Pancreas (tissue), 10 donors: ENCODE measurements at regions of chr20 and their contacts with region 1.

Region 1: GRCh38 chr20:46349035-46349741 is 40.9 kb upstream of the CDH22 start:
- DNase-seq: peak; percentile 45 to 84 (median 67)
- ATAC-seq: peak; percentile 49 to 92 (median 80)
- H3K4me3 ChIP-seq: no peak overlapping the region
- H3K27ac ChIP-seq: no peak overlapping the region
- H3K4me1 ChIP-seq: no peaks in the 10 kb centered on the region
- H3K27me3 ChIP-seq: no peaks in the 10 kb centered on the region
- CTCF ChIP-seq: peak; percentile 28 to 76 (median 68)

Region 2: DNA sequence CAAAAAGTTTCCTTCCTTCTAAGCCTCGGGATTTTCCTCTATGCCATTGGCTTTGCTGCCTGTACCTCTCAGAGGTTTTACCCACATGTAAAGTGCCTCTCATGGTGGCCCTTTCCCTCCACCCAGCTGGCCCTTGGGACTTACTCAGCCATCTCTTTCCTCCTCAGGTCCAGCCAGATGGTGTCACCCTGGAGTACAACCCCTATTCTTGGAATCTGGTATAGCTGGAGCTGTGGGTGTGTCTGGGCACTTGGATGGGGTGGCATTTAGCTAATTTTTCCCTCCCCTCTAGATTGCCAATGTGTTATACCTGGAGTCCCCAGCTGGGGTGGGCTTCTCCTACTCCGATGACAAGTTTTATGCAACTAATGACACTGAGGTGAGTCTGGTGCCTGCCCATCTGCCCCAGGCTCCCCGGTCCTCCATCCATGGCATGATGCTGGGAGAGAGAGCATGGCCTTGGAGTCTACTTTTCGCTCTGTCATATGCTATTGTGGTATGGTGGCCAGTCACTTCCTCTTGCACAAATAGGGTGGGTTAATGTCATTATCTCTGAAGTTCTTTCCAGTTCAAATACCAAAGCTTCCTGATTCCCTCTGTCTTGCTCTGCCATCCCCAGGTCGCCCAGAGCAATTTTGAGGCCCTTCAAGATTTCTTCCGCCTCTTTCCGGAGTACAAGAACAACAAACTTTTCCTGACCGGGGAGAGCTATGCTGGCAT is 456.9 kb before region 1 on chr20:
- intact Hi-C with region 1: no loop called
- DNase-seq: peak in 2 of 6 donors; percentile 31 to 52
- ATAC-seq: peak in 2 of 4 donors; percentile 26 to 40
- H3K4me3 ChIP-seq: peak overlapping the region; percentile 65 to 93 (median 80)
- H3K27ac ChIP-seq: no peak overlapping the region
- H3K4me1 ChIP-seq: peaks cover 3 to 4% (median 4%) of the 10 kb centered on the region in 3 donors
- H3K27me3 ChIP-seq: no peaks in the 10 kb centered on the region
- CTCF ChIP-seq: no peak

Region 3: DNA sequence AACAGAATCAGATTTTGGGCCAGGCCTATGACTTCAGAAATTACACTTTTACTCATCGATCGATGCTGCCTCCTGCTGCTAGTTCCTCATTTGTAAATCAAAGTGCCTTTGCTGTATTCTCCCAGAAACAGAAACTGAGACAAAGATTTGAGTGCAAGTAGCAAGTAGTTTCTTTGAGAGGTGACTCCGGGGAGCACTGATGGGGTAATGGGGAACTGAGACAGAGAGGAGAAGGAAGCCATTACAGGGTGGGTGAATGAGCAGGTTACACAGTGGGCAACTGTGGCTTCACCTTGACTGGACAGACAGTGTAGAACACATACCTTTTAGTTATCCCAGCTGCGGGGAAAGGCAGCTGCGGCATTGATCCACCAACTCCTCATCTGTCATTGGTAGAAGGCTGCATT is 240.8 kb before region 1 on chr20:
- intact Hi-C with region 1: no loop called
- DNase-seq: no peak
- ATAC-seq: no peak
- H3K4me3 ChIP-seq: no peak overlapping the region
- H3K27ac ChIP-seq: no peak overlapping the region
- H3K4me1 ChIP-seq: no peaks in the 10 kb centered on the region
- H3K27me3 ChIP-seq: peaks cover 0 to 9% (median 0%) of the 10 kb centered on the region in 4 donors
- CTCF ChIP-seq: no peak

Region 4: DNA sequence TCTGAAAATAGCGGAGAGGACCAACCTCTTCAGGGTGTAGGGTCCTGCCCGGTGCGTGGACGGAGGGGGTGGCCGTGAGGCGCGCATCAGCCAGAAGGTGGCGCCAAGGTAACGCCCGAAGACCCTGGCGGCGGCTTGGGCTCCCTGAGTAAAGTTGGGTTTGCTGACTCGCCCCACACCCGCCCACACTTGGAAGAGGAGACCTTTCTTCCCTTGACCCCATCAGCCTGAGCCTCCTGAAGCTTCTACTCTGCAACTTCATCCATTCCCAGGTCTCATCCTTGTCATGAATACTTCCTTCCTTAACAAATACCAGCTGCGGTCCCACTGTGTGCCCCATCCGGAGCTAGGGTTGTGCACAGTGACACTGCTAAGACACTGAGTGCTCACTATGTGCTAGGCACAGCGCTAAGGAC is 216.5 kb before region 1 on chr20:
- intact Hi-C with region 1: loop called in 2 of 3 experiments (anchors 5 to 10 kb)
- DNase-seq: peak; percentile 47 to 89 (median 72)
- ATAC-seq: peak; percentile 87 to 97 (median 94)
- H3K4me3 ChIP-seq: no peak overlapping the region
- H3K27ac ChIP-seq: no peak overlapping the region
- H3K4me1 ChIP-seq: no peaks in the 10 kb centered on the region
- H3K27me3 ChIP-seq: no peaks in the 10 kb centered on the region
- CTCF ChIP-seq: peak; percentile 46 to 68 (median 56)

Region 5: GRCh38 chr20:46283426-46284039 is 65.7 kb before region 1 on chr20:
- intact Hi-C with region 1: no loop called
- DNase-seq: peak in 1 of 6 donors; percentile 24
- ATAC-seq: peak in 2 of 4 donors; percentile 20 to 39
- H3K4me3 ChIP-seq: no peak overlapping the region
- H3K27ac ChIP-seq: no peak overlapping the region
- H3K4me1 ChIP-seq: no peaks in the 10 kb centered on the region
- H3K27me3 ChIP-seq: no peaks in the 10 kb centered on the region
- CTCF ChIP-seq: no peak

Region 6: DNA sequence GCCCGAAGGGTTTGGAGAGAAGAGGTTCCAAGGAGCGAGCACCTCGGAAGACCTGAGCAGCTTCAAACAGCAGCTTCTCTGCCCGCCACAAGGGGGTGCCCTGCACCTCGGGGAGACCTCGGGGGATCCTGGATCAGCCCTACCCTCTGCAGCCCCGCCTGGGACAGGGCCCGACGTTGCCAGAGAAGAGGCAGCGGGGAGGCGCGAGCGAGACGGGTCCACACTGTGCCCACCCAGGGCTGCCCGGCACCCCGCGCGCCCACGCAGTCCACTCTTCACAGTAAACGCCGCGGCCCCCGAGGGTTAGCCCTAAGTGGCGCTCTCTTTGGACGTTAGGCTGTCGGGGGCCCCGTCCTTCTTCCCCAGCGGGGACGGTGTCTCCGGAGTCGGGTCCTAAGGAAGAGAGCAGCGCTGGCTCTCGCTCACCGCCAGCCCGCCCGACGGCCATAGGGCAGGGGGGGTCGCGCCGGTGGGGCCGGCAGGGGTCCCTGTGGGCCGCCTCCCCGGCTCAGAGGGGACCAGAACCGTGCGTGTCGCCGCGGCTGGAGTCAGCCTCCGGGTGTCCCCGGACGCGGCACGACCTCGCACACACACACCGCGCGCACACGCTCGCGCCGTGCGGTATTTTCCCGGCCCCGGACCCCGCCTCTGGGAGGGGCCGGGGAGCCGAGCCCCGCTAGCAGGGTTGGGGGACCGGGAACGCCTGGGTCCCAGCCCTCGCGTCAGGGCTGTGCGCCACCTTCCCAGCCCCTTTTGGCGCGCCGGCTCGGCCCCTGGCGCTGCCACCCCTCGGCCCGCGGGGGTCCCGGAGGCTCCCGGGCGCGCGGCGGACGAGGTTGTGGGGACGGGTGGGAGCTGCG is 41.8 kb before region 1 on chr20:
- intact Hi-C with region 1: loop called in 1 of 3 experiments (anchors 5 kb)
- DNase-seq: peak; percentile 53 to 89 (median 68)
- ATAC-seq: peak; percentile 59 to 81 (median 71)
- H3K4me3 ChIP-seq: peak overlapping the region; percentile 16 to 67 (median 38)
- H3K27ac ChIP-seq: no peak overlapping the region
- H3K4me1 ChIP-seq: peaks cover 12 to 19% (median 13%) of the 10 kb centered on the region in 3 donors
- H3K27me3 ChIP-seq: no peaks in the 10 kb centered on the region
- CTCF ChIP-seq: peak; percentile 78 to 88 (median 81)